CD8-positive, alpha-beta T cell (primary cell): ENCODE measurements at regions of chr10 and their contacts with region 1.

Region 1: GRCh38 chr10:75000748-75001321 is 110.6 kb upstream of the SAMD8 start:
- DNase-seq: no peak
- ATAC-seq: no peak
- H3K4me3 ChIP-seq: no peak overlapping the region
- H3K4me3 Mint-ChIP-seq: no peak overlapping the region
- H3K27ac ChIP-seq: no peak overlapping the region
- H3K27ac Mint-ChIP-seq: peak overlapping the region; percentile 60
- H3K4me1 ChIP-seq: no peaks in the 10 kb centered on the region
- H3K4me1 Mint-ChIP-seq: peaks cover 8% of the 10 kb centered on the region
- H3K27me3 ChIP-seq: no peaks in the 10 kb centered on the region
- H3K27me3 Mint-ChIP-seq: no peaks in the 10 kb centered on the region
- CTCF ChIP-seq: no peak

Region 2: GRCh38 chr10:74419958-74420375 is 580.9 kb before region 1 on chr10:
- CTCF ChIA-PET with region 1: no interaction called
- POLR2A ChIA-PET with region 1: no interaction called
- intact Hi-C with region 1: loop called in 1 of 2 experiments (anchors 10 kb)
- DNase-seq: peak in 7 of 9 experiments; percentile 1 to 54 (median 36)
- ATAC-seq: peak; percentile 58
- H3K4me3 ChIP-seq: no peak overlapping the region
- H3K4me3 Mint-ChIP-seq: no peak overlapping the region
- H3K27ac ChIP-seq: no peak overlapping the region
- H3K27ac Mint-ChIP-seq: no peak overlapping the region
- H3K4me1 ChIP-seq: no peaks in the 10 kb centered on the region
- H3K4me1 Mint-ChIP-seq: peaks cover 5% of the 10 kb centered on the region
- H3K27me3 ChIP-seq: no peaks in the 10 kb centered on the region
- H3K27me3 Mint-ChIP-seq: no peaks in the 10 kb centered on the region
- CTCF ChIP-seq: peak; percentile 55

Region 3: GRCh38 chr10:75035975-75036708 is 35.3 kb after region 1 on chr10:
- CTCF ChIA-PET with region 1: no interaction called
- POLR2A ChIA-PET with region 1: no interaction called
- intact Hi-C with region 1: no loop called
- DNase-seq: peak in 1 of 9 experiments; percentile 29
- ATAC-seq: no peak
- H3K4me3 ChIP-seq: no peak overlapping the region
- H3K4me3 Mint-ChIP-seq: no peak overlapping the region
- H3K27ac ChIP-seq: no peak overlapping the region
- H3K27ac Mint-ChIP-seq: peak overlapping the region; percentile 8
- H3K4me1 ChIP-seq: no peaks in the 10 kb centered on the region
- H3K4me1 Mint-ChIP-seq: peaks cover 7% of the 10 kb centered on the region
- H3K27me3 ChIP-seq: no peaks in the 10 kb centered on the region
- H3K27me3 Mint-ChIP-seq: no peaks in the 10 kb centered on the region
- CTCF ChIP-seq: no peak

Region 4: GRCh38 chr10:75048669-75049098 is 47.8 kb after region 1 on chr10:
- CTCF ChIA-PET with region 1: no interaction called
- POLR2A ChIA-PET with region 1: no interaction called
- intact Hi-C with region 1: no loop called
- DNase-seq: no peak
- ATAC-seq: no peak
- H3K4me3 ChIP-seq: no peak overlapping the region
- H3K4me3 Mint-ChIP-seq: no peak overlapping the region
- H3K27ac ChIP-seq: no peak overlapping the region
- H3K27ac Mint-ChIP-seq: no peak overlapping the region
- H3K4me1 ChIP-seq: no peaks in the 10 kb centered on the region
- H3K4me1 Mint-ChIP-seq: peaks cover 7% of the 10 kb centered on the region
- H3K27me3 ChIP-seq: no peaks in the 10 kb centered on the region
- H3K27me3 Mint-ChIP-seq: peaks cover 4% of the 10 kb centered on the region
- CTCF ChIP-seq: no peak